Calu3 (cell line): ENCODE measurements at regions of chr6 and their contacts with region 1.

Region 1: GRCh38 chr6:130900913-130901312 is 73.7 kb downstream of the SMLR1 start:
- DNase-seq: peak; percentile 19
- H3K4me3 Mint-ChIP-seq: no peak overlapping the region
- H3K27ac Mint-ChIP-seq: no peak overlapping the region
- H3K4me1 Mint-ChIP-seq: no peaks in the 10 kb centered on the region
- H3K27me3 Mint-ChIP-seq: no peaks in the 10 kb centered on the region
- CTCF ChIP-seq: no peak

Region 2: DNA sequence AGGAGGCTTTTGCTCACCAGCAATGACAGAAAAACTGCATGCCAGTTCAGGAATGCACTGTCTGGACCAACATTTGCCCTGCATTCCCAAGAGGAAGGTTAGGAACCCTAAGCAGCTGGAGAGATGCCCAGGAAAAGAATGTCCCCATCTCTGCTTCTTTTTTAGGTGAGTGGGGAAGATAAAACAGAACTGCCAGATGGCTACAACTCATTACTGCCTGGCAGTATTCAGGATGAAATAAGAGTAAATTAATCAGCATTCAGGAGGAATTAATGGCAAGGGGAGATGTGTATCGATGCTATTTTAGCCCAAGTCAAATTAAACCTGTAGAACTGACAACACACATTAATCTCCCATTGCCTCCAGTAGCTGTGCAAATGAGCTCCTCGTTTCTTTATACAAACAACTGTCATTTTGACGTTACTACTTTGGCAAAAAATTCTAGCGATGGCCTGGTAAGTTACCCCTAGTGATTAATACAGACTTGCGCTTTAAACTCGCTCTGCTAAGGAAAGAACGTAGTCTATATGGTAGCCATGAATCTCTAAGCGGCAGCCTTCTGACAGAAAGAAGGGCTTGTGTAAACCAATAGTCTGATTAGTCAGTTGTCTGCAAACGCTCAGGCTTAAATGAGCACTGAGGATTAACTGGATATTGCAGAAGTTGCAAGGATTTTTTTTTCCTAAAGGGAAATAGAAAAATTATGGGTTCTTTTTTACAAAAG is 90.4 kb before region 1 on chr6:
- CTCF ChIA-PET with region 1: no interaction called
- intact Hi-C with region 1: no loop called
- DNase-seq: no peak
- H3K4me3 Mint-ChIP-seq: no peak overlapping the region
- H3K27ac Mint-ChIP-seq: no peak overlapping the region
- H3K4me1 Mint-ChIP-seq: no peaks in the 10 kb centered on the region
- H3K27me3 Mint-ChIP-seq: no peaks in the 10 kb centered on the region
- CTCF ChIP-seq: no peak

Region 3: GRCh38 chr6:130920969-130921368 is 20.1 kb after region 1 on chr6:
- CTCF ChIA-PET with region 1: no interaction called
- intact Hi-C with region 1: loop called (anchors 1 kb)
- DNase-seq: no peak
- H3K4me3 Mint-ChIP-seq: no peak overlapping the region
- H3K27ac Mint-ChIP-seq: no peak overlapping the region
- H3K4me1 Mint-ChIP-seq: peaks cover 22% of the 10 kb centered on the region
- H3K27me3 Mint-ChIP-seq: no peaks in the 10 kb centered on the region
- CTCF ChIP-seq: no peak